ENCODE measurements at regions of chr17 and their contacts with region 1.

Region 1: DNA sequence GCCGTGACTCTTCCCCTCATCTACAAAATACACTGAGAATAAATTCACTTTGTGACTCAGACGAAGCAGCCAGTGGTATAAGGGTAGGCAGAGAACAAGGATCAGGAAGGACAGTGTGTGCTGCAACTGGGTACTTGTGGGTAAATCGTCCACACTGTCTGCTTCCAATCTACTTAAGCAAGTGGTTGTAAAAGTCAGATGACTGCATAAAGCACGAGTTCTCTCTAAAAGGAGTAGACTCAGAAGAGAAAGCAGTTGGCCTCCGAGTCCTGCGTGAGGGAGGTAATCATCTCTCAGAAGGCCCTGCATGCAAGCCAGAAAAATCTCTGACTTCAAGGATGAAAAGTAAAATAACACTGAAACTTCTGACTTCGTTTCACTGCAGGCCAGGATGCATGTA is 43.1 kb downstream of the ANKFY1 start:
- DNase-seq: no peak
- ATAC-seq: peak; percentile 64 to 78 (median 68)
- H3K4me3 ChIP-seq: peak overlapping the region in 1 of 12 donors; percentile 3
- H3K27ac ChIP-seq: peak overlapping the region in 11 of 12 donors; percentile 14 to 89 (median 61)
- H3K4me1 ChIP-seq: peaks cover 0 to 24% (median 9%) of the 10 kb centered on the region in 12 donors
- H3K27me3 ChIP-seq: no peaks in the 10 kb centered on the region
- CTCF ChIP-seq: no peak
- POLR2A ChIP-seq: no peak

Region 2: DNA sequence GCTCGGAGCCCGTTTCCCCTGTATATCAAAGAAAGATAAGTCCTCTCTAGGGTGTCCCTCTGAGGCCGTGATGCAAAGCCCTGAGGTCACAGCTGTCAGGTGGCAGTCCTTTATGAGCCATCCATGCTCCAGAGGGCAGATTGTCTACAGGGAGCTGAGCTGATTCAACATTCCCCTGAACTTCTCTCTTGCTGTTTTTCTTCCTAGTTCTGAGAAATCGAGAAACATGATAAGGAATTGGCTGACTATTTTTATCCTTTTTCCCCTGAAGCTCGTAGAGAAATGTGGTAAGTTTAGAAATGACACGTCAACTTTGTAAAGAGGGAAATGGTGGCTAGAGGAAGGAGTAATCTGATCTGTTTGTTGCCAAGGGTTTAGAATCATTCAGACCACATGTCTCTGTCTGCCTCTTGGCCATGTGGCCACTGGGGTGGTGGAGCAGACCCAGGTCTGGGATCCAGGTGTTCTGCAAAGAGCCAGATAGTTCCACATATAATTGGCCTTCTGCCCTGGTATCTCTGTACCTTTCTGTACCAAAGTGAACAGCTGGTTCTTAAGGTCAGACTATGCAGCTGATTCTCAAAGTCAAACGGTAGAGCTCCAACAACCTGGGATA is 580.6 kb before region 1 on chr17:
- intact Hi-C with region 1: no loop called
- DNase-seq: peak in 1 of 5 donors; percentile 39
- ATAC-seq: no peak
- H3K4me3 ChIP-seq: no peak overlapping the region
- H3K27ac ChIP-seq: peak overlapping the region in 10 of 12 donors; percentile 7 to 82 (median 54)
- H3K4me1 ChIP-seq: peaks cover 0 to 40% (median 24%) of the 10 kb centered on the region in 12 donors
- H3K27me3 ChIP-seq: no peaks in the 10 kb centered on the region
- CTCF ChIP-seq: no peak
- POLR2A ChIP-seq: no peak

Region 3: DNA sequence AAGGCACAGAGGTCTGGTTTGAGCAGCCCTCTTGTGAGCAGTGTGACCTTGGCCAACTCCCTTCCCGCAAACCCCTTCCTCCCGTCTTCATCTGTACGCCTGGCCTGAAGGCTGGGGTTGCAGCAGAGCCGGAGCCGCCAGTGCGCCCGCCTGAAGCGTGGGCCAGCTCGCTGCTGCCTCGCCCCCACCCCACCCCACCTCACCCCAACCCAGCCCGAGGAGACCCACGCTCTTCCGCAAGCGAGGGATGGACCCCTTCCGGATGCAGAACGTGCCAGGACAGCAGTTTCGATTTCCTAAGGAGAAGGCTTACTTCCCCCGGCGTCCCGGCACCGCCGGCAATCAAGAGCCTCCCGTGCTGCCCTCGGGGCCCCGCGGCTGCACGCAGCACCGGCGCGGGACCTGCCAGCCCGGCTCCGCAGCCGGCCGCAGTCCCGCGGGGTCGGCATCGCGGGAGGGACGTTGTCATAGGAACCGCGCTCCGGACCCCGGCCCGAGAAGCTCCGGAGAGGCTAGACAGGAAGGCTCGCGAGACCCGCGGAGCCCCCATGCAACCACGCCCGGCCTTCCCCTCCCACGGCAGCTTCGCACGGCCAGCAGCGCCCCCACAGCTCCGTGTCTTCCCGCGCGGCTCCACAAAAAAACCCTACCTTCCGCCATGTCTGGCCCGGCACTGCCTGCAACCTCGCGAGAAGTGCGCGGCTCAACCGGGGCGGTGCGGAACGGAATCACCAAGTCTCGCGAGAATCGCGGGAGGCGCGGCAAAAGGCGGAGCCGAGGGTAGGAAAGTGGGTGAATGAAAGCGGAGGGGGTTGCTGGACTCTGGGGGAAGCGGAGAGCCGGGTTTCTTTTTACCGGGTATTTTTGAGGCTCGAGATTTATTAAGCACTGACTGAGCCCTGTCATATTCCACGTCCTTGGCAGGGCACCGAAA is 42.9 kb after region 1 on chr17 and contains the start of gene ANKFY1:
- intact Hi-C with region 1: loop called in 4 of 10 experiments (anchors 5 to 10 kb)
- DNase-seq: peak; percentile 97 to 99 (median 97)
- ATAC-seq: peak; percentile 93 to 98 (median 96)
- H3K4me3 ChIP-seq: peak within 1 kb of the TSS; percentile 83 to 99 (median 97)
- H3K27ac ChIP-seq: peak within 1 kb of the TSS; percentile 74 to 95 (median 90)
- H3K4me1 ChIP-seq: peaks cover 0 to 34% (median 19%) of the 10 kb centered on the region in 12 donors
- H3K27me3 ChIP-seq: no peaks in the 10 kb centered on the region
- CTCF ChIP-seq: peak in 5 of 12 donors; percentile 15 to 38 (median 34)
- POLR2A ChIP-seq: peak in 1 of 2 donors; percentile 87
- total RNA-seq, gene ANKFY1: 20.6 to 44.9 (median 24.9) TPM

Region 4: GRCh38 chr17:4297351-4297750 is 76.7 kb after region 1 on chr17:
- intact Hi-C with region 1: loop called in 8 of 10 experiments (anchors 5 to 10 kb)
- DNase-seq: no peak
- ATAC-seq: no peak
- H3K4me3 ChIP-seq: no peak overlapping the region
- H3K27ac ChIP-seq: no peak overlapping the region
- H3K4me1 ChIP-seq: peaks cover 0 to 39% (median 8%) of the 10 kb centered on the region in 12 donors
- H3K27me3 ChIP-seq: no peaks in the 10 kb centered on the region
- CTCF ChIP-seq: no peak
- POLR2A ChIP-seq: no peak

Region 5: DNA sequence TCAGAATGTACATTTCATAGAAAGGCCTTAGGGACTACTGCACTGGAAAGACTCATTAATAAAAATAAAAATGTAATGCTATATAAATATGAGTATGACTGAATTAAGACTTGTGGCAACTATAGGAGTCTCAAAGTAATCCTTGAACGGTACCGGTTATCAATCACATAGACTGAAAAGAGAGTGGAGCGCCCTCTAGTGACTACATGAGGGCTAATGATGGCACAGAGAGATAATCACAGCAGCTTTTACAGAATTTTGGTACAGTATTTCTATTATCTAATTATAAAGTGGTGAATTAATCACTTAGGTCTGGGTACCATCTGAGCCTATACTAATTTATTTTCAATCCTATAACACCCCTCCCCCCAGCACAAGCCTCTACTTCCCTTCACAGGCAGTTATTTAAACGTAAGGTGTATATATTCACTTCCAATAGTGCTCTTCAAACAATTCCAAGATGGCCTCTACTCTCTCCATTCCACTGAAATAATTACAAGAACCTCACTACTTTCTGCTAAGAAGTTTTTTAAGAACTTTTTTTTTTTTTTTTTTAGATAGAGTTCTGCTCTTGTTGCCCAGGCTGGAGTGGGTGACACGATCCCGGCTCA is 83.9 kb after region 1 on chr17:
- intact Hi-C with region 1: loop called (anchors 2 to 10 kb)
- DNase-seq: peak in 3 of 5 donors; percentile 21 to 33 (median 32)
- ATAC-seq: peak in 2 of 4 donors; percentile 54 to 70
- H3K4me3 ChIP-seq: no peak overlapping the region
- H3K27ac ChIP-seq: no peak overlapping the region
- H3K4me1 ChIP-seq: peaks cover 0 to 35% (median 13%) of the 10 kb centered on the region in 12 donors
- H3K27me3 ChIP-seq: no peaks in the 10 kb centered on the region
- CTCF ChIP-seq: peak; percentile 53 to 89 (median 75)
- POLR2A ChIP-seq: no peak

Region 6: DNA sequence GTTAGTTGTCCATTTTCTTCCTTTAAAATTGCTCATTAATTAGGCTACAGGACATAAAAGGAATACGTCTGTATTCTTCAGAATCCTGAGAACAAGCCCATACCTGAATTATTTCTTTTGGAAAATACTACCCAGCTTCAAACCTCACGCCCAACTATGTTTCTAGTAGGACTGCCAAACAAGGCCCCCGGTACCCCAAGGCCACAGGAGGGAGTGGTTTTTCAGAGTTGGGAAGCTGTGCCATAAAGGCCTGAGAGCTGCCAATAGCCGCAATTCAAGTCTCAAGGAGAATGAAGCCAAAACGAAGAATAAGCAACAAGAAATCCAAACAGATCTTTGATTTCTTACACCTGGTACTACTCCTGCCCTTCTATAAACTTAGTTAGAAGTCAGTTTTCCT is 97.5 kb after region 1 on chr17:
- intact Hi-C with region 1: loop called in 1 of 10 experiments (anchors 5 kb)
- DNase-seq: no peak
- ATAC-seq: no peak
- H3K4me3 ChIP-seq: no peak overlapping the region
- H3K27ac ChIP-seq: peak overlapping the region in 7 of 12 donors; percentile 0 to 49 (median 16)
- H3K4me1 ChIP-seq: peaks cover 7 to 64% (median 43%) of the 10 kb centered on the region in 12 donors
- H3K27me3 ChIP-seq: no peaks in the 10 kb centered on the region
- CTCF ChIP-seq: no peak
- POLR2A ChIP-seq: no peak

Region 7: GRCh38 chr17:4412933-4413831 is 192.5 kb after region 1 on chr17:
- intact Hi-C with region 1: loop called (anchors 1 to 5 kb)
- DNase-seq: peak; percentile 90 to 95 (median 92)
- ATAC-seq: peak; percentile 93 to 98 (median 98)
- H3K4me3 ChIP-seq: peak overlapping the region in 1 of 12 donors; percentile 23
- H3K27ac ChIP-seq: no peak overlapping the region
- H3K4me1 ChIP-seq: peaks cover 0 to 8% (median 0%) of the 10 kb centered on the region in 12 donors
- H3K27me3 ChIP-seq: no peaks in the 10 kb centered on the region
- CTCF ChIP-seq: peak; percentile 83 to 96 (median 88)
- POLR2A ChIP-seq: no peak